Activated T-helper 1 cell treated with anti-CD3 and anti-CD28 coated beads, Interleukin-12 subunit alpha, Interleukin-12 subunit beta, Interleukin-2, Interleukin-4 antibody, amounts not matched to agents 30 ng/mL and 10 ng/mL and 1 ng/mL, durations not matched to agents 14 hours and 24 hours and 36 hours (primary cell): ENCODE measurements at regions of chr10 and their contacts with region 1.

Region 1: GRCh38 chr10:14751921-14752320 is 22.8 kb downstream of the FAM107B start:
- DNase-seq: no peak
- H3K4me3 Mint-ChIP-seq: no peak overlapping the region
- H3K27ac Mint-ChIP-seq: no peak overlapping the region
- H3K4me1 Mint-ChIP-seq: no peaks in the 10 kb centered on the region
- H3K27me3 Mint-ChIP-seq: no peaks in the 10 kb centered on the region

Region 2: DNA sequence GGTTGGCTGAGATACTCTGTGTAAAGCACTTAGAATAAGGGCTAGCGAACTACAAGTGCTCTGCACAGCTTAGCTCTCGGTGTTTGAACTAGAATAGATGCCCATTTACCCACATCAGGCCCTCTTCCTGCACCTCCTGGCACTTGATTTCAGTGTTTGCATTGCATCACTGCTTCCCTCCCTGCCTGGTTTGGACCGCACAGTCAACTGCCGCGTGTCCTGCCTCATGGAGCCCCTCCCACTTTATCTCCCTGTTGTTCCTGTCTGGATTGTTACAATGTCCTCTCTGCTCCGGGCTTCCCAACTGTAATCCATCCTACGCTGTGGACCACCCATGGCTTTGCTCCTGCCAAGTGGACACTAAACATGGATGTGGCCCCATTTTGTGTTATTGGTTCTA is 20.5 kb after region 1 on chr10:
- intact Hi-C with region 1: loop called (anchors 2 kb)
- DNase-seq: no peak
- H3K4me3 Mint-ChIP-seq: no peak overlapping the region
- H3K27ac Mint-ChIP-seq: no peak overlapping the region
- H3K4me1 Mint-ChIP-seq: no peaks in the 10 kb centered on the region
- H3K27me3 Mint-ChIP-seq: peaks cover 6% of the 10 kb centered on the region

Region 3: GRCh38 chr10:15531927-15532722 is 780.2 kb after region 1 on chr10:
- intact Hi-C with region 1: no loop called
- DNase-seq: no peak
- H3K4me3 Mint-ChIP-seq: no peak overlapping the region
- H3K27ac Mint-ChIP-seq: no peak overlapping the region
- H3K4me1 Mint-ChIP-seq: no peaks in the 10 kb centered on the region
- H3K27me3 Mint-ChIP-seq: no peaks in the 10 kb centered on the region